ENCODE measurements at regions of chr10 and their contacts with region 1.

Region 1: GRCh38 chr10:80205478-80206276 is at the start of gene ANXA11:
- DNase-seq: peak; percentile 81 to 91 (median 81)
- H3K4me3 ChIP-seq: peak within 1 kb of the TSS; percentile 80
- H3K4me3 Mint-ChIP-seq: peak within 1 kb of the TSS; percentile 82 to 97 (median 94)
- H3K27ac ChIP-seq: peak within 1 kb of the TSS; percentile 74
- H3K27ac Mint-ChIP-seq: peak within 1 kb of the TSS; percentile 92 to 97 (median 95)
- H3K4me1 ChIP-seq: peaks cover 50% of the 10 kb centered on the region
- H3K4me1 Mint-ChIP-seq: peaks cover 48 to 55% (median 54%) of the 10 kb centered on the region in 3 donors
- H3K27me3 ChIP-seq: no peaks in the 10 kb centered on the region
- H3K27me3 Mint-ChIP-seq: no peaks in the 10 kb centered on the region
- total RNA-seq, gene ANXA11: 211 to 217 TPM

Region 2: DNA sequence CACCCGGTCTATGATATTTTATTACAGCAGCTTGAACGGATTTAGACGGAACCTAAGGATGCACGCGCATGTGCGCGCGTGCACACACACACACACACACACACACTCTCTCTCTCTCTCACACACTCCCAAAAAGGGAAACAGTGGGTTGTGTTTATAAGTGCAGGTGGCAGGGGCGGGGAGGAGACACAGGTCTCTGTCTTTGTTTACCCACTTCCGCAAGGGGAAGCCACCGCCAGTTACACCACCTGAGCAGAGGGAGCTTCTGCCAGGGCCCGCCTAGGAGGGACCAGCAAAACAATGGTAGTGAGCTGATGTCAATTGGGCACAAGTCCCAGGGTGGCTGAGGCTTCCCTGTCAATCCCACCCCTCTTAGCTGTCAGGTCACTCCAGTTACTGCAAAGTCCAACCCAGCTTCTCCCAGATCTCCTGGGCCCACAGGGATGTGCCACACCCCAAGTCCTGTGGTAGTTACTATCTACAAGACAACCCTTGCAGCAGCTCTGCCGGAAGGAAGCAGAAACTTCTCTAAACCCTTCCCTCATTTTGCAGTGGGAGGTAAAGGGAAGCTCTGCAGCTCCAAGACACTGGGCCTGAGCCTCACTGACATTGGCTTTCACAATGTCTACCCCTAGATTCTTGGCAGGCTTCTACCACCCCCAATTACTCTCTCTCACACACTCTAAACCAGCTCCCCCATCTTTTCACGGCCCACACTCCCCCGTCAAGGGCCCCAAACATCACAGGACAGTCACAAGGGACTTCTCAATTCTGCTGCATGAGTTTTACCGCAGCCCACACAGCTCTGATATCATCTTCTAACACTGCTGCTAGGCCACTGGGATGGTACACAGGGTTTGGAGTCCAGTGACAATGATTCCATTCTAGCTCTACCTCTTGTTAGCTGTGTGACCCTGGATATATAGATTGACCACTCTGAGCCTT is 17.9 kb before region 1 on chr10:
- CTCF ChIA-PET with region 1: interaction called, 50 read pairs
- POLR2A ChIA-PET with region 1: interaction called, 66 read pairs
- DNase-seq: peak; percentile 64 to 93 (median 87)
- H3K4me3 ChIP-seq: peak overlapping the region; percentile 54
- H3K4me3 Mint-ChIP-seq: peak overlapping the region; percentile 66 to 87 (median 75)
- H3K27ac ChIP-seq: peak overlapping the region; percentile 72
- H3K27ac Mint-ChIP-seq: peak overlapping the region; percentile 85 to 94 (median 92)
- H3K4me1 ChIP-seq: peaks cover 93% of the 10 kb centered on the region
- H3K4me1 Mint-ChIP-seq: peaks cover 76 to 91% (median 85%) of the 10 kb centered on the region in 3 donors
- H3K27me3 ChIP-seq: no peaks in the 10 kb centered on the region
- H3K27me3 Mint-ChIP-seq: no peaks in the 10 kb centered on the region